GM10248 (cell line): ENCODE measurements at regions of chr14 and their contacts with region 1.

Region 1: GRCh38 chr14:106665814-106666213 is 1139.4 kb downstream of the TMEM121 start:
- DNase-seq: no peak
- CTCF ChIP-seq: peak; percentile 14

Region 2: DNA sequence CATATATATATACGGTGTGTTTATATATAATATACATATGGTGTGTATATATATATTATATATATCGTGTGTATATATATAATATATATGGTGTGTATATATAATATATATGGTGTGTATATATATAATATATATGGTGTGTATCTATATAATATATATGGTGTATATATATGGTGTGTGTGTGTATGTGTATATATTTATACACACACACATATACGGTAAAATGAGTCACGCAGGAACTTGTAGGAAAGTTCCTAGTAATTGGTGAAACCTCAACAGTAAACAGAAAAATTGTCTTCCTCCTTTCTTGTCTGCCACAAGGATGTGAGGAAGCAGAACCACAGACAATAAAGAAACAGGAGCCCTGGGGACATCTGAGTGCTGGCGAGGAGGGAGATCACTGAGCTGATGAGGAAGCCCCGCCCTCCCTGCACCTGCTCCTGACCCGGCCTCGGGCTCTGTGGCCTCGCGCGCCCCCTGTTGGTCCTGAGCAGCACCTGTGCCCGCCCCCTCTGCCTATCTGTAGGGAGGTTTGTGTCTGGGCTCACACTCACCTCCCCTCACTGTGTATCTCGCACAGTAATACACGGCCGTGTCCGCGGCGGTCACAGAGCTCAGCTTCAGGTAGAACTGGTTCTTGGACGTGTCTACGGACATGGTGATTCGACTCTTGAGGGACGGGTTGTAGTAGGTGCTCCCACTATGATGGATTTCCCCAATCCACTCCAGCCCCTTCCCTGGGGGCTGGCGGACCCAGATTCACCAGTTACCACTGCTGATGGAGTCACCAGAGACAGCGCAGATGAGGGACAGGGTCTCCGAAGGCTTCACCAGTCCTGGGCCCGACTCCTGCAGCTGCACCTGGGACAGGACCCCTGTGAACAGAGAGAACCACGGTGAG is 60.0 kb before region 1 on chr14:
- CTCF ChIA-PET with region 1: interaction called, 18 read pairs
- POLR2A ChIA-PET with region 1: no interaction called
- DNase-seq: peak; percentile 74
- CTCF ChIP-seq: peak; percentile 90

Region 3: GRCh38 chr14:106631879-106632278 is 33.9 kb before region 1 on chr14:
- CTCF ChIA-PET with region 1: interaction called, 34 read pairs
- POLR2A ChIA-PET with region 1: no interaction called
- DNase-seq: no peak
- CTCF ChIP-seq: no peak

Region 4: GRCh38 chr14:106681568-106681967 is 15.8 kb after region 1 on chr14:
- CTCF ChIA-PET with region 1: interaction called, 30 read pairs
- POLR2A ChIA-PET with region 1: no interaction called
- DNase-seq: no peak
- CTCF ChIP-seq: no peak

Region 5: GRCh38 chr14:106738075-106738474 is 72.3 kb after region 1 on chr14:
- CTCF ChIA-PET with region 1: interaction called, 14 read pairs
- POLR2A ChIA-PET with region 1: no interaction called
- DNase-seq: no peak
- CTCF ChIP-seq: no peak